RWPE1 (cell line): ENCODE measurements at regions of chr16 and their contacts with region 1.

Region 1: DNA sequence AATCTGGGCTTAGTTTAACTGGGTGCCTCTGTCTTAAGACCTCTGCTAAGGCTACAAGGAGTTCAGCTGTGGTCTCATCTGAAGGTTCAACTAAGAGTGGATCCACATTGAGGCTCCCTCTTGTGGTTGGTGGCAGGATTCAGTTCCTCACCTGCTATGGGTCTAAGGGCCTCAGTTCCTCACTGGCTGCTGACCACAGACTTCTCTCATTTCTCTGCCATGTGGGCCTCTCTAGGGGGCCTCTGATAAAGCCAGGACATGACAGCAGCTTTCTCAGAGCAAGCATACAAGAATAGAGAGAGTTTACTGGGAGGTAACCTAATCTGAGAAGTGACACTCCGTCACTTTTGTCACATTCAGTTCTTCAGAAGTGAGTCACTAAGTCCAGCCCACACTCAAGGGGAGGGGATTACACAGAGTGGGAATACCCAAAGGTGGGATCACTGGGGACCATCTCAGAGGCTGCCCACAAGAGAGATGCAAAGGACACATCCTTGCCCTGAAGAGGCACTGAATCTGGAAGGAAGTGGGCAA is 19.2 kb upstream of the ABAT start:
- DNase-seq: no peak
- H3K27ac ChIP-seq: no peak overlapping the region
- CTCF ChIP-seq: no peak

Region 2: GRCh38 chr16:8665529-8665928 is 10.3 kb after region 1 on chr16:
- CTCF ChIA-PET with region 1: no interaction called
- POLR2A ChIA-PET with region 1: no interaction called
- DNase-seq: no peak
- H3K27ac ChIP-seq: no peak overlapping the region
- CTCF ChIP-seq: no peak

Region 3: DNA sequence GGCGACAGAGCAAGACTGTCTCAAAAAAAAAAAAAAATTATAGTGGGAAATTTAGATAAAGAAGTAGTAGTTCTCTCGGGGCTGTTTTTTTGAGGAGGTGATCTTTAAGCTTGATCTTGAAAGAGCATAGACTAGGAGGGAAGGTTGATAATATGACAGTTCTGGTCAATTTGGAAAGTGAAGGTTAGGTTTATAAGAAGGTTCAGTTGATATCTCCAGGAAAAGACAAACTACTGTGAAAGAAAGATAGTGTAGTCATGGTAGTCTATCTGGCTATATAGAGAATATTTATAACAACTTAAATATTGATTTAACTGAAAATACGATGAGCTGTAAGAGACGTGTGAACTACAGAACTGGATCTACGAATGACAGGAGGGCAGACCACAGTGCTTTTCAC is 1733.7 kb after region 1 on chr16:
- CTCF ChIA-PET with region 1: no interaction called
- POLR2A ChIA-PET with region 1: interaction called, 10 read pairs
- DNase-seq: no peak
- H3K27ac ChIP-seq: no peak overlapping the region
- CTCF ChIP-seq: no peak